ENCODE measurements at regions of chr12 and their contacts with region 1.

Region 1: GRCh38 chr12:17866802-17867201 is 223.2 kb downstream of the RERGL start:
- DNase-seq: no peak
- H3K4me3 Mint-ChIP-seq: no peak overlapping the region
- H3K27ac Mint-ChIP-seq: no peak overlapping the region
- H3K4me1 Mint-ChIP-seq: no peaks in the 10 kb centered on the region
- H3K27me3 Mint-ChIP-seq: no peaks in the 10 kb centered on the region

Region 2: GRCh38 chr12:17778242-17778641 is 88.6 kb before region 1 on chr12:
- CTCF ChIA-PET with region 1: no interaction called
- intact Hi-C with region 1: loop called (anchors 5 kb)
- DNase-seq: no peak
- H3K4me3 Mint-ChIP-seq: no peak overlapping the region
- H3K27ac Mint-ChIP-seq: no peak overlapping the region
- H3K4me1 Mint-ChIP-seq: no peaks in the 10 kb centered on the region
- H3K27me3 Mint-ChIP-seq: no peaks in the 10 kb centered on the region

Region 3: DNA sequence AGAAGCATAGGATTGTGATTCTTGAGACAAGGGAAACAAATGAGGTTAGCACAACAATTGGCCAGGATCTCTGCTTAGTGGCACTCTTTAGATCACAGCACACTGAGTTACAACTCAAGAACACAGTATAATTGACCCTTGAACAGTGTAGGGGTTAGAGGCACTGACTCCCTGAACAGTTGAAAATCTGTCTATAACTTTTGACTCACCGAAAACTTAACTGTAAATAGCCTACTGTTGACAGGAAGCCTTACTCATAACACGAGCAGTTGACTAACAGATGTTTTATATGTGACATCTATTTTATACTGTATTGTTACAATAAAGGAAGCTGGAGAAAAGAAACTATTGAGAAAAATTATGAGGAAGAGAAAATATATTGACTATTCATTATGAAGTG is 72.9 kb before region 1 on chr12:
- CTCF ChIA-PET with region 1: no interaction called
- intact Hi-C with region 1: no loop called
- DNase-seq: no peak
- H3K4me3 Mint-ChIP-seq: no peak overlapping the region
- H3K27ac Mint-ChIP-seq: no peak overlapping the region
- H3K4me1 Mint-ChIP-seq: no peaks in the 10 kb centered on the region
- H3K27me3 Mint-ChIP-seq: no peaks in the 10 kb centered on the region